ENCODE measurements at regions of chr3 and their contacts with region 1.

Region 1: GRCh38 chr3:81463781-81464180 is 297.7 kb downstream of the GBE1 start:
- DNase-seq: no peak
- ATAC-seq: no peak
- H3K4me3 ChIP-seq: no peak overlapping the region
- H3K27ac ChIP-seq: no peak overlapping the region
- H3K4me1 ChIP-seq: no peaks in the 10 kb centered on the region
- H3K27me3 ChIP-seq: no peaks in the 10 kb centered on the region
- CTCF ChIP-seq: no peak
- POLR2A ChIP-seq: no peak
- RAD21 ChIP-seq: no peak

Region 2: DNA sequence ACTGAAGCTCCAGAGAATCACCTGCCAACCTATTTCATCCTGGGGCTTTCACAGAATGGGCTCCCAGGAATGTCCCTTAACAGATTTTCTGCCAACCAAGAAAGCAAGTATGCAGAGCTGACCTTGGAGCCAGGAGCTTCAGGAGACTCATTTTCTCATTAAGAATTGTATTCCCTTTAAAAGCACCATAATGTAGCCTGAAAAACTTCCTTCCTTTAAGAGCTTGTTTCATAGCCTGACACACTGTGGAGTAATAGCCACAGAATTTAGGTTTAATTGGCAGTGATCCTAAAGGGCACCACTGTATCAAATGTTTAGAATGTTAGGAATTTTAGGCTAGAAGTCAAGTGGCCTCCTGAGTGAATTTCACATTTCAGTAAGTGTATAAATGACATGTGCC is 12.2 kb before region 1 on chr3:
- CTCF ChIA-PET with region 1: no interaction called
- POLR2A ChIA-PET with region 1: no interaction called
- dilution Hi-C with region 1: no loop called
- in situ Hi-C with region 1: no loop called
- intact Hi-C with region 1: loop called (anchors 1 kb)
- DNase-seq: no peak
- ATAC-seq: no peak
- H3K4me3 ChIP-seq: no peak overlapping the region
- H3K27ac ChIP-seq: no peak overlapping the region
- H3K4me1 ChIP-seq: no peaks in the 10 kb centered on the region
- H3K27me3 ChIP-seq: no peaks in the 10 kb centered on the region
- CTCF ChIP-seq: no peak
- POLR2A ChIP-seq: no peak
- RAD21 ChIP-seq: no peak

Region 3: GRCh38 chr3:81531263-81531662 is 67.5 kb after region 1 on chr3:
- CTCF ChIA-PET with region 1: no interaction called
- POLR2A ChIA-PET with region 1: no interaction called
- dilution Hi-C with region 1: no loop called
- in situ Hi-C with region 1: no loop called
- intact Hi-C with region 1: no loop called
- DNase-seq: no peak
- ATAC-seq: no peak
- H3K4me3 ChIP-seq: no peak overlapping the region
- H3K27ac ChIP-seq: no peak overlapping the region
- H3K4me1 ChIP-seq: no peaks in the 10 kb centered on the region
- H3K27me3 ChIP-seq: no peaks in the 10 kb centered on the region
- CTCF ChIP-seq: no peak
- POLR2A ChIP-seq: no peak
- RAD21 ChIP-seq: no peak

Measured in IMR-90 (cell line).